Activated CD8-positive, alpha-beta T cell treated with anti-CD3 and anti-CD28 coated beads for 36 hours (primary cell): ENCODE measurements at regions of chr1 and their contacts with region 1.

Region 1: DNA sequence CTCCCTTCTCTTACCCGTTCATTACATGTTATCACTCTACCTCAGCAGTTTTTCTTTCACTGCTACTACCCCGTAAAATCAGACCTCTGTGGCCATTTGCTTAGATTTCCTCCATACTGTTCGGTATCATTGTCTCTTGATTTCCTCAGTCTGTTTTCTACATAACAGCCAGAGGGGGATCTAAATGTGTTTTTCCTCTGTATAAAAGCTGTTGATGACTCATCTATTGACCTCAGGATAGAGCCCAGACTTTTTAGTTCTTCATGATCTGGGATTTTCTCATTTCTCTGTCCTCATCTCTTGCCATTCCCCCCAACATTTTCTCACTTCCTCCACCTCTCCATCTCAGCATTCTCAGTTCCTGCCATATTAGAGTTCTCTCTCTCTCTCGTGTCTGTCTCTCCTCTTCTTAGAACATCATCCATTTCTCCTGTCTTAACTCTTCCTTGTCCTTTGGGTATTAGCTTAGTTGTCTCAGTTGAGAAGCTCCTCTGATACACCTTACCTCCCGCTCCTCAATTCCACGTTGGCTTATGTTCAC is 10.5 kb downstream of the OTUD3 start:
- DNase-seq: no peak
- ATAC-seq: no peak
- H3K4me3 Mint-ChIP-seq: no peak overlapping the region
- H3K27ac Mint-ChIP-seq: no peak overlapping the region
- H3K4me1 Mint-ChIP-seq: peaks cover 11% of the 10 kb centered on the region
- H3K27me3 Mint-ChIP-seq: no peaks in the 10 kb centered on the region
- CTCF ChIP-seq: no peak

Region 2: GRCh38 chr1:19661721-19662228 is 230.9 kb before region 1 on chr1:
- CTCF ChIA-PET with region 1: no interaction called
- POLR2A ChIA-PET with region 1: no interaction called
- intact Hi-C with region 1: no loop called
- DNase-seq: peak; percentile 68
- ATAC-seq: no peak
- H3K4me3 Mint-ChIP-seq: no peak overlapping the region
- H3K27ac Mint-ChIP-seq: no peak overlapping the region
- H3K4me1 Mint-ChIP-seq: peaks cover 22% of the 10 kb centered on the region
- H3K27me3 Mint-ChIP-seq: peaks cover 24% of the 10 kb centered on the region
- CTCF ChIP-seq: peak; percentile 88

Region 3: GRCh38 chr1:19882111-19883071 is 10.3 kb before region 1 on chr1 and contains the start of gene OTUD3:
- CTCF ChIA-PET with region 1: interaction called, 20 read pairs
- POLR2A ChIA-PET with region 1: interaction called, 3 read pairs
- intact Hi-C with region 1: no loop called
- DNase-seq: peak; percentile 95
- ATAC-seq: peak; percentile 98
- H3K4me3 Mint-ChIP-seq: peak within 1 kb of the TSS; percentile 85
- H3K27ac Mint-ChIP-seq: peak within 1 kb of the TSS; percentile 77
- H3K4me1 Mint-ChIP-seq: peaks cover 34% of the 10 kb centered on the region
- H3K27me3 Mint-ChIP-seq: peaks cover 6% of the 10 kb centered on the region
- CTCF ChIP-seq: peak; percentile 82
- total RNA-seq, gene OTUD3: 7.3 to 8.7 TPM